B cell (primary cell): ENCODE measurements at regions of chr1 and their contacts with region 1.

Region 1: DNA sequence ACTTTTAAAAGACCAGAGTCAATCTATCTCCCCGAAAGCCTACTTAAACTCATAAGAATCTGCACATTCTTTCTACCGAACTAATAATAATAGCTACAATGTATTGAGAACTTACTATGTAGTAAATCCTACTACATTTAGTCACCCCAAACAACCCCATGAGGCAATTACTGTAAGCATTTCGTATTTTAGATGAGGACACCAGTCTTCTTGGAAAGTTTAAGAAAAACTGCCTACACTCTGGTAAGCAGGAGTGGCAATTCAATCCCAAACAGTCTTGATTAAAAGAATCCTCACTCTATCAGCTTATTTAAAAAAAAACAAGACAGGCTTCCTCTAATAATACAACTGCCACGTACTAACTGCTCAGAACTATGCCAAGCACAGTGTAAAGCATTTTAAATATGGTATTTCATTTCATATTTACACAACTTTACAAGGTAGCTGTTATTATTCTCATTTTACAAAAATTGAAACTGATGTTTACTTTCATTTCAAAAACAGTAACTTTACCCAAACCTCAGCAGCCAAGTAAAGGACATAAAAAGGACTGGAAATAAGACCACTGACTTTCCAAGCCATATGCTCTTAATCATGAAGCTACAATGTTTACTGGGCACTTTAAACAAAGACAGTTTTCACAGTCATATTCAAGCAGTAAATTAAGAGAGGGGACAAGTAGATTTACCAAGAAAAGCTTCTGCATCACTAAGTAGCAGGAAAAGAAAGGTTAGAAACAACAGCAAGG is 13.9 kb downstream of the ARID4B start:
- DNase-seq: no peak
- ATAC-seq: no peak
- H3K4me3 ChIP-seq: no peak overlapping the region
- H3K4me3 Mint-ChIP-seq: no peak overlapping the region
- H3K27ac ChIP-seq: peak overlapping the region in 1 of 2 donors; percentile 54
- H3K27ac Mint-ChIP-seq: no peak overlapping the region
- H3K4me1 ChIP-seq: peaks cover 16 to 18% of the 10 kb centered on the region in 2 donors
- H3K4me1 Mint-ChIP-seq: peaks cover 51% of the 10 kb centered on the region
- H3K27me3 ChIP-seq: no peaks in the 10 kb centered on the region
- H3K27me3 Mint-ChIP-seq: no peaks in the 10 kb centered on the region
- CTCF ChIP-seq: no peak

Region 2: GRCh38 chr1:235275223-235275622 is 38.9 kb before region 1 on chr1:
- CTCF ChIA-PET with region 1: interaction called, 4 read pairs
- POLR2A ChIA-PET with region 1: no interaction called
- intact Hi-C with region 1: loop called (anchors 5 kb)
- DNase-seq: peak; percentile 72
- ATAC-seq: peak; percentile 83
- H3K4me3 ChIP-seq: no peak overlapping the region
- H3K4me3 Mint-ChIP-seq: peak overlapping the region; percentile 2
- H3K27ac ChIP-seq: peak overlapping the region; percentile 21 to 86
- H3K27ac Mint-ChIP-seq: peak overlapping the region; percentile 3
- H3K4me1 ChIP-seq: peaks cover 40 to 41% of the 10 kb centered on the region in 2 donors
- H3K4me1 Mint-ChIP-seq: peaks cover 70% of the 10 kb centered on the region
- H3K27me3 ChIP-seq: no peaks in the 10 kb centered on the region
- H3K27me3 Mint-ChIP-seq: no peaks in the 10 kb centered on the region
- CTCF ChIP-seq: no peak